ENCODE measurements at regions of chr1 and their contacts with region 1.

Region 1: GRCh38 chr1:42931108-42931539 is 27.5 kb downstream of the SLC2A1 start:
- DNase-seq: peak; percentile 39 to 79 (median 60)
- ATAC-seq: peak; percentile 37 to 43
- H3K4me3 Mint-ChIP-seq: peak overlapping the region; percentile 55 to 91 (median 78)
- H3K27ac Mint-ChIP-seq: peak overlapping the region; percentile 90 to 99 (median 96)
- H3K4me1 Mint-ChIP-seq: peaks cover 43 to 75% (median 72%) of the 10 kb centered on the region in 4 donors
- H3K27me3 Mint-ChIP-seq: no peaks in the 10 kb centered on the region

Region 2: DNA sequence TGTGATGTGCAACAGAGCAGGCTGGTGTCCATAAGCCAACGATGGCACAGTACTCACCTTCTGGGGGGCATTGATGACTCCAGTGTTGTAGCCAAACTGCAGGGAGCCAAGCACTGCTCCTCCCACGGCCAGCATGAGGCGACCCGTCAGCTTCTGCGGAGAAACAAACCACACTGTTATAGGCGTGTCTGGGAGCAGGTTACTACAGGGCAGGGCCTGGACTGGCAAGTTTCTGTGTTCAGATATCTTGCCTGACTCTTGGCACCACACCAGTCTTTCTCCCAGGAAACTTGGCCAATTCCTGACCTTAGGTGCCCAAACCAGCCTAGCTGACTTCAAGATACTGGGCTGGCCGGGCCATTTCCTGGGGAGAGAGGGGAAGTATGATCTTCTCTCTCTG is 12.0 kb after region 1 on chr1:
- POLR2A ChIA-PET with region 1: interaction called, 12 read pairs
- DNase-seq: peak in 1 of 10 donors; percentile 35
- ATAC-seq: peak; percentile 33 to 85
- H3K4me3 Mint-ChIP-seq: peak overlapping the region in 8 of 10 donors; percentile 53 to 82 (median 64)
- H3K27ac Mint-ChIP-seq: peak overlapping the region; percentile 63 to 91 (median 84)
- H3K4me1 Mint-ChIP-seq: peaks cover 59 to 99% (median 97%) of the 10 kb centered on the region in 4 donors
- H3K27me3 Mint-ChIP-seq: no peaks in the 10 kb centered on the region

Region 3: GRCh38 chr1:42952303-42953001 is 21.3 kb after region 1 on chr1:
- POLR2A ChIA-PET with region 1: interaction called, 56 read pairs
- DNase-seq: peak in 4 of 10 donors; percentile 34 to 73 (median 36)
- ATAC-seq: peak; percentile 72 to 74
- H3K4me3 Mint-ChIP-seq: peak overlapping the region; percentile 44 to 79 (median 65)
- H3K27ac Mint-ChIP-seq: peak overlapping the region; percentile 49 to 95 (median 83)
- H3K4me1 Mint-ChIP-seq: peaks cover 36 to 93% (median 92%) of the 10 kb centered on the region in 4 donors
- H3K27me3 Mint-ChIP-seq: no peaks in the 10 kb centered on the region

Region 4: GRCh38 chr1:42958488-42959319 is 27.6 kb after region 1 on chr1 and contains the start of gene SLC2A1:
- POLR2A ChIA-PET with region 1: interaction called, 56 read pairs
- DNase-seq: peak; percentile 88 to 98 (median 94)
- ATAC-seq: peak; percentile 81 to 87
- H3K4me3 Mint-ChIP-seq: peak within 1 kb of the TSS; percentile 94 to 100 (median 98)
- H3K27ac Mint-ChIP-seq: peak within 1 kb of the TSS; percentile 92 to 99 (median 98)
- H3K4me1 Mint-ChIP-seq: peaks cover 27 to 73% (median 59%) of the 10 kb centered on the region in 4 donors
- H3K27me3 Mint-ChIP-seq: no peaks in the 10 kb centered on the region
- polyA plus RNA-seq, gene SLC2A1: 17.7 to 22.8 (median 22.0) TPM

Measured in naive thymus-derived CD8-positive, alpha-beta T cell (primary cell).